GM10248 (cell line): ENCODE measurements at regions of chr19 and their contacts with region 1.

Region 1: DNA sequence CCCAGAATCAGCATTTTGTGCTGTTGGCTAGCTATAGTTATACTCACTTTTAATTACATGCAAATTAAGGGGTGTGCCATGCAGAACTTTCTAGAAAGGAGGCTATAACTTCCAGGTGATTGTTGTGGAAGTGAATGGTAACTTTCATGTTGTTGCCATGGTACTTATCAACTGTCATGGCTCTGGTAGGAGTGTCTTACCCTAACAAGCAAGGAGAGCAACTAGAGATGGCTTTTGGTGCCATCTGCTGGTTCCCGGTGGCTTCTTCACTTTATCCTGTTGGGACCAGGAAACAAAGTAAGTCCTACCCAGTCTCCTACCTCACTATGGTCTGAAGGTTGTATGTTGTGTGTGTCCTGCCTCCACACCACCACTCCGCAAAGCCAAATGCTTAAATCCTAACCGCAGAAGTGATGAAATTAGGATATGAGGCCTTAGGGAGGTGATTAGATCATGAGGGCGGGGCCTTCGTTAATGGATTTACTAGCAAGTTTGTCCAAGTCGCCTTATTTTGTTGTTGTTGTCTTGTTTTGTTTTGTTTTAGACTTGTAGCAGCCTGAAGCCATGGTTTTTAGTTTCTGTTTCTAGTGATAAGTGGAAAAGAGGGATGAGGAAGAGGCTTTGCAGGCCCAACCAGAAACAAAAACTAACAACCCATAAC is 22.6 kb downstream of the FBXL12 start:
- DNase-seq: peak; percentile 70
- CTCF ChIP-seq: peak; percentile 81

Region 2: GRCh38 chr19:9205501-9206113 is 590.6 kb before region 1 on chr19:
- CTCF ChIA-PET with region 1: interaction called, 11 read pairs
- POLR2A ChIA-PET with region 1: no interaction called
- DNase-seq: peak; percentile 47
- CTCF ChIP-seq: peak; percentile 97

Region 3: DNA sequence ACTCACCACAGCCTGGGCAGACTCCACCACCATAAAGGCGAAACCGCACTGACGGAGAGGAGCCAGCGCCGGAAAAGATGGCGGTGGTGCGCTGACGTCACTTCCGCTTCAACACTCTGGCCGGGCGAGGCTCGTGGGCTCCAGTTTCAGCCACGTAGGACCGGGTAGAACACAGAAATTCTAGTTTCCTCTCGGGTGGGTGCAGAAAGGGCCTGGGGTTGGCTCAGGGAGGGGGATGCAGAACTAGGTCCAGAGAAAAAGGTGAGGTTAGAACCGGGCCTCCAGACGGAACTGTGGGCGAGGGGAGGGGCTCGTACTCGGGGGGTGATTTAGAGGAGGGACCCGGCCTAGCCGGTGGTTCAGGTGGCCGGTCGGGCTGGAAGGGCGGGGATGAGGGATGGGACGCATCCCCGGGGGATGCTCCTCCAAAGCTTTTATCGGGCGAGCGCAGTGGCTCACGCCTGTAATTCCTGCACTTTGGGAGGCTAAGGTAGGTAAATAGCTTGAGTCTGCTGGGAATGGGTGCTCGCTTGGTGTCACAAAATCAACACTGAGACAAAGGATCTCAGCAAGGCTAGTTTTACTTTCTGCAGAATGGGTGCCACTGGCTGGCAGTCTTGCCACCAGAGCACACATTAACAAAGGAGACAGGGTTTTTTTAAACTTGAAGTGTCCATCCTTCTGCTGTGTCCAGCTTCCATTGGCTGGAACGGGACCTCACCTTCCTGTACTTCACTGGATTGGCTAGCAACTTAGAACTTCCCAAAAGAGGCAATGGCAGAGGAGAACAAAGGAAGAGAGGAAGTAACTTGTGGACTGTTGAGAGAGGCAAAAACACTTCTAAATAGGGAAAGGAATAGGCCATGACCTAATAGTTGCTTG is 174.8 kb before region 1 on chr19 and contains the start of gene ZNF561:
- CTCF ChIA-PET with region 1: interaction called, 30 read pairs
- POLR2A ChIA-PET with region 1: no interaction called
- DNase-seq: peak; percentile 85
- CTCF ChIP-seq: no peak

Region 4: GRCh38 chr19:9741476-9742171 is 54.6 kb before region 1 on chr19:
- CTCF ChIA-PET with region 1: no interaction called
- POLR2A ChIA-PET with region 1: no interaction called
- DNase-seq: no peak
- CTCF ChIP-seq: no peak

Region 5: GRCh38 chr19:9806803-9807202 is 10.6 kb after region 1 on chr19:
- CTCF ChIA-PET with region 1: interaction called, 18 read pairs
- POLR2A ChIA-PET with region 1: no interaction called
- DNase-seq: no peak
- CTCF ChIP-seq: no peak